ENCODE measurements at regions of chr13 and their contacts with region 1.

Region 1: GRCh38 chr13:45538382-45538781 is 73.6 kb downstream of the COG3 start:
- DNase-seq: no peak
- ATAC-seq: no peak
- H3K4me3 ChIP-seq: no peak overlapping the region
- H3K27ac ChIP-seq: no peak overlapping the region
- H3K4me1 ChIP-seq: peaks cover 3% of the 10 kb centered on the region; the same call in 1 of the 2 replicates
- H3K27me3 ChIP-seq: no peaks in the 10 kb centered on the region; the same call in 1 of the 2 replicates
- CTCF ChIP-seq: no peak
- POLR2A ChIP-seq: no peak
- RAD21 ChIP-seq: no peak

Region 2: GRCh38 chr13:45473627-45474026 is 64.8 kb before region 1 on chr13:
- CTCF ChIA-PET with region 1: no interaction called
- POLR2A ChIA-PET with region 1: no interaction called
- dilution Hi-C with region 1: no loop called
- in situ Hi-C with region 1: loop called (anchors 10 kb)
- intact Hi-C with region 1: no loop called
- DNase-seq: no peak
- ATAC-seq: no peak
- H3K4me3 ChIP-seq: no peak overlapping the region
- H3K27ac ChIP-seq: no peak overlapping the region
- H3K4me1 ChIP-seq: peaks cover under 1% of the 10 kb centered on the region; the same call in 1 of the 2 replicates
- H3K27me3 ChIP-seq: no peaks in the 10 kb centered on the region
- CTCF ChIP-seq: 0 out of 2 replicates have a peak, but pooled peaks have one; percentile 10
- POLR2A ChIP-seq: no peak
- RAD21 ChIP-seq: no peak

Region 3: DNA sequence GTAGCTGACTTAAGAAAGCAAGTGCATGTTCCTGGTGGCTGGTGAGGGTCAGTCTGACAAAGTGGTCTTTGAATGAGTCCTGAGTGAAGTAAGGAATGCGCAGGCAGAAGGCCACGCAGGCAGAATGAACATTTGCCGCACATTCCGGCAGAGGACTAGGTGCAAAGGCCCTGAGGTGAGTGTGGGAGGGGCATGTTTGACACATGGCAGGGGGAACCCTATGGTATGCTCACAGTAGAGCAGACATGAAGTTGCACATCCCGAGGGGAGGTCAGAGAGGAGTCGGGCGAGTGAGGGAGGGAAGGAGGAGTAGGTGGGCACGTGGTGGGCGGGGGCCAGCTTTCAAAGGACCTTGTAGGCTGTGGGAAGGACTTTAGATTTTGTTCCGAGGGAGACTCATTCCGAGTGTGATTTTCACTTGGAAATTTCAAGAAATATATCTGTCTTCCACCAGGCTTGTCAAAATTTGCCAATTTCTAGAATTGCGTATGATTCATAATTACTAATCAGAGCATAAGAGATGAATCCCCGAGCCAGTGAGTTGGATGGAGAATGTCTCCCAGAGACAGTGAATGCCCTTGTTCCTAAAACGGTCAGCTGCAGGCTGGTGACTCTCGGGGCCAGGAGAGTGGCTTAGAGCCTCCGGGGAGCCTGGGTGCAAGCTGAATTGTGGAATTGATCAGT is 36.9 kb after region 1 on chr13:
- CTCF ChIA-PET with region 1: no interaction called
- POLR2A ChIA-PET with region 1: no interaction called
- dilution Hi-C with region 1: no loop called
- in situ Hi-C with region 1: no loop called
- intact Hi-C with region 1: no loop called
- DNase-seq: no peak
- ATAC-seq: no peak
- H3K4me3 ChIP-seq: no peak overlapping the region
- H3K27ac ChIP-seq: no peak overlapping the region
- H3K4me1 ChIP-seq: no peaks in the 10 kb centered on the region
- H3K27me3 ChIP-seq: peaks cover 15% of the 10 kb centered on the region
- CTCF ChIP-seq: no peak
- POLR2A ChIP-seq: no peak
- RAD21 ChIP-seq: no peak